Activated T-helper 2 cell treated with anti-CD3 and anti-CD28 coated beads, Interferon-gamma antibody, Interleukin-2, Interleukin-4, amounts not matched to agents 10 μg/mL and 5 μg/mL and 100 μg/mL, durations not matched to agents 14 hours and 24 hours and 36 hours (primary cell): ENCODE measurements at regions of chr10 and their contacts with region 1.

Region 1: GRCh38 chr10:58268870-58269605 is at the start of gene CISD1:
- DNase-seq: peak; percentile 94
- H3K4me3 Mint-ChIP-seq: peak within 1 kb of the TSS; percentile 90
- H3K27ac Mint-ChIP-seq: peak within 1 kb of the TSS; percentile 95
- H3K4me1 Mint-ChIP-seq: peaks cover 20% of the 10 kb centered on the region
- H3K27me3 Mint-ChIP-seq: no peaks in the 10 kb centered on the region
- total RNA-seq, gene CISD1: 39.7 and 43.2 TPM in 2 replicates

Region 2: GRCh38 chr10:56360967-56361612 is 1907.9 kb before region 1 on chr10 and contains the start of gene ZWINT:
- intact Hi-C with region 1: loop called (anchors 5 kb)
- DNase-seq: peak; percentile 93
- H3K4me3 Mint-ChIP-seq: peak within 1 kb of the TSS; percentile 98
- H3K27ac Mint-ChIP-seq: peak within 1 kb of the TSS; percentile 91
- H3K4me1 Mint-ChIP-seq: peaks cover 39% of the 10 kb centered on the region
- H3K27me3 Mint-ChIP-seq: no peaks in the 10 kb centered on the region
- total RNA-seq, gene ZWINT: 84.3 and 87.6 TPM in 2 replicates

Region 3: DNA sequence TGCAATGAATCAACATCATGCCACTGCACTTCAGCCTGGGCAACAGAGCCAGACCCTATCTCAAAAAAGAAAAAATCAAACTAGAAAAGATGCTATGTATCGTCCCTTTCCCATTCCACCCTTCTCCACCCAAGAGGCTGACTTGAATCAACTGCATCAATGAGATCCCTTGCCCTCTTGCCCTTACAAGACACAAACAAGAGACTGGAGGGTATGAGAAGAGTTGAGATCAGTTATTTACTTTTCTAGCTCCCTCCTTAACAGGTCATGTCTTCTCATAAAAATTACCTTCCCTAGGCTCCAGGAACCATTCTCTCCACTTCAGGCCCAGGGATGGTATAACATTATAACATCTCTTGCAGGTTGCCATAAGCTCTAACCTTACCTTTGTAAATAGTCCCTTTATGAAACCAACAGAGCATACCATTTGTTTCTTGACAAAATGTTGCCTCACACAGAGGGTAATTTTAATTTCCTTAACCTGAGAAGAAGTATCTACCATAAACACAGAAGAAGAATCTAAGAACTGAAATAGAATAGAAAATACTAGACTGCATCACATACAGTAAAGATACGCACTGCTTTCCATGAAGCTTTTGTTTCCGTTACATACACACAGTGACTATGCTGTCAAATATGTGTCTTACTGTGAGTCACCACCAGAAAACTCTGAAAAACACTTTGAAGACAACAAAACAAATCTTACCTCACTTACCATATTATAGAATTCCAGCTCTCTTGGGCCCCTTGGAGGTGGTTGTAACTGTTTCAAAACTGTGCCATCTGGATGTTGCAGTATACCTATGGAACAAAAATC is 31.8 kb before region 1 on chr10:
- intact Hi-C with region 1: loop called (anchors 1 kb)
- DNase-seq: no peak
- H3K4me3 Mint-ChIP-seq: no peak overlapping the region
- H3K27ac Mint-ChIP-seq: peak overlapping the region; percentile 20
- H3K4me1 Mint-ChIP-seq: peaks cover 18% of the 10 kb centered on the region
- H3K27me3 Mint-ChIP-seq: no peaks in the 10 kb centered on the region

Region 4: DNA sequence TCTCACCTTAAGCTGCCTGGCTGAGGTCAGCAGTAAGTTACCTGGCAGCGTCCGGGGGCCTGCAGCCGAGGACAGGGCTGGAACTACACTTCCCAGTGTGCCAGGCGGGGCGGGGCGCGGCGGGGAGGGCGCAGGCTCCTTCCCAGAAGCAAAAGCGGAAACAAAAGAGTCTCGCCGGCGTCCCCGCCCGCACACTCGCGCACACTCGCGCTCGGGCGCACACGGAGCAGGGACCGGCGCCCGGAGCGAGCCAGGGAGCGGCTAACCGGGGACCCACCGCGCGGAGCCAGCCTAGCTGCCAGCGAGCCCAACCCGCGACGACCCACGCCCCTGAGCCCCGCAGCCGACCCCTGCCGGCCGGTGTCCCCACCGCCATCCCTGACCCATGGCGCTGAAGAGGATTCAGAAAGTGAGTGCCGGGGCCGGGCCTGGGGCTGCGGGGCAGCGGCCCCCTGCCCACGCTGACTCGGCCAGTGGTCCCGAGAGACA is 65.8 kb after region 1 on chr10 and contains the start of gene UBE2D1:
- intact Hi-C with region 1: loop called (anchors 2 kb)
- DNase-seq: peak; percentile 69
- H3K4me3 Mint-ChIP-seq: peak within 1 kb of the TSS; percentile 99
- H3K27ac Mint-ChIP-seq: peak within 1 kb of the TSS; percentile 81
- H3K4me1 Mint-ChIP-seq: peaks cover 23% of the 10 kb centered on the region
- H3K27me3 Mint-ChIP-seq: peaks cover 16% of the 10 kb centered on the region
- total RNA-seq, gene UBE2D1: 14.8 and 14.9 TPM in 2 replicates